H1 (cell line): ENCODE measurements at regions of chr2 and their contacts with region 1.

Region 1: GRCh38 chr2:42040643-42041278 is 7.1 kb upstream of the PKDCC start:
- DNase-seq: no peak
- H3K4me3 ChIP-seq: no peak overlapping the region
- H3K27ac ChIP-seq: no peak overlapping the region
- H3K4me1 ChIP-seq: peaks cover 4 to 9% (median 8%) of the 10 kb centered on the region in 4 experiments; a peak in 5 of 7 replicates
- H3K27me3 ChIP-seq: no peaks in the 10 kb centered on the region
- CTCF ChIP-seq: peak; percentile 22 to 52 (median 49)
- EP300 ChIP-seq: no peak
- POLR2A ChIP-seq: no peak
- RAD21 ChIP-seq: peak; percentile 38 to 63; a peak in 3 of 4 replicates

Region 2: GRCh38 chr2:41879235-41879916 is 161.4 kb before region 1 on chr2:
- CTCF ChIA-PET with region 1: interaction called, 22 read pairs
- POLR2A ChIA-PET with region 1: no interaction called
- DNase-seq: no peak
- H3K4me3 ChIP-seq: no peak overlapping the region
- H3K27ac ChIP-seq: no peak overlapping the region
- H3K4me1 ChIP-seq: peaks cover 0 to 7% (median 1%) of the 10 kb centered on the region in 4 experiments; a peak in 2 of 7 replicates
- H3K27me3 ChIP-seq: no peaks in the 10 kb centered on the region
- CTCF ChIP-seq: no peak
- EP300 ChIP-seq: no peak
- POLR2A ChIP-seq: no peak
- RAD21 ChIP-seq: no peak

Region 3: GRCh38 chr2:41937464-41937906 is 103.3 kb before region 1 on chr2:
- CTCF ChIA-PET with region 1: interaction called, 18 read pairs
- POLR2A ChIA-PET with region 1: interaction called, 20 read pairs
- DNase-seq: peak in 1 of 2 experiments; percentile 58
- H3K4me3 ChIP-seq: peak overlapping the region in 1 of 4 experiments; percentile 23; a peak in 1 of 8 replicates
- H3K27ac ChIP-seq: peak overlapping the region; percentile 27; the same call in 1 of the 2 replicates
- H3K4me1 ChIP-seq: peaks cover 10 to 33% (median 26%) of the 10 kb centered on the region in 4 experiments
- H3K27me3 ChIP-seq: no peaks in the 10 kb centered on the region; a peak in 1 of 7 replicates
- CTCF ChIP-seq: peak in 2 of 3 experiments; percentile 4 to 19; a peak in 2 of 4 replicates
- EP300 ChIP-seq: no peak
- POLR2A ChIP-seq: no peak
- RAD21 ChIP-seq: peak; percentile 7 to 28; a peak in 3 of 4 replicates

Region 4: GRCh38 chr2:42010810-42011209 is 30.0 kb before region 1 on chr2:
- CTCF ChIA-PET with region 1: interaction called, 12 read pairs
- POLR2A ChIA-PET with region 1: no interaction called
- DNase-seq: no peak
- H3K4me3 ChIP-seq: no peak overlapping the region
- H3K27ac ChIP-seq: no peak overlapping the region
- H3K4me1 ChIP-seq: no peaks in the 10 kb centered on the region
- H3K27me3 ChIP-seq: no peaks in the 10 kb centered on the region
- CTCF ChIP-seq: no peak
- EP300 ChIP-seq: no peak
- POLR2A ChIP-seq: no peak
- RAD21 ChIP-seq: no peak

Region 5: GRCh38 chr2:42028571-42029148 is 12.1 kb before region 1 on chr2:
- CTCF ChIA-PET with region 1: interaction called, 26 read pairs
- POLR2A ChIA-PET with region 1: interaction called, 46 read pairs
- DNase-seq: no peak
- H3K4me3 ChIP-seq: no peak overlapping the region
- H3K27ac ChIP-seq: no peak overlapping the region
- H3K4me1 ChIP-seq: peaks cover 19 to 42% (median 27%) of the 10 kb centered on the region in 4 experiments
- H3K27me3 ChIP-seq: peaks cover 0 to 12% (median 7%) of the 10 kb centered on the region in 4 experiments; a peak in 3 of 7 replicates
- CTCF ChIP-seq: no peak
- EP300 ChIP-seq: no peak
- POLR2A ChIP-seq: no peak
- RAD21 ChIP-seq: no peak

Region 6: GRCh38 chr2:42053791-42054701 is 13.3 kb after region 1 on chr2:
- CTCF ChIA-PET with region 1: interaction called, 31 read pairs
- POLR2A ChIA-PET with region 1: interaction called, 46 read pairs
- DNase-seq: no peak
- H3K4me3 ChIP-seq: no peak overlapping the region
- H3K27ac ChIP-seq: no peak overlapping the region
- H3K4me1 ChIP-seq: peaks cover 5 to 45% (median 36%) of the 10 kb centered on the region in 4 experiments
- H3K27me3 ChIP-seq: peaks cover 0 to 6% (median 4%) of the 10 kb centered on the region in 4 experiments; a peak in 5 of 7 replicates
- CTCF ChIP-seq: no peak
- EP300 ChIP-seq: no peak
- POLR2A ChIP-seq: no peak
- RAD21 ChIP-seq: no peak

Region 7: DNA sequence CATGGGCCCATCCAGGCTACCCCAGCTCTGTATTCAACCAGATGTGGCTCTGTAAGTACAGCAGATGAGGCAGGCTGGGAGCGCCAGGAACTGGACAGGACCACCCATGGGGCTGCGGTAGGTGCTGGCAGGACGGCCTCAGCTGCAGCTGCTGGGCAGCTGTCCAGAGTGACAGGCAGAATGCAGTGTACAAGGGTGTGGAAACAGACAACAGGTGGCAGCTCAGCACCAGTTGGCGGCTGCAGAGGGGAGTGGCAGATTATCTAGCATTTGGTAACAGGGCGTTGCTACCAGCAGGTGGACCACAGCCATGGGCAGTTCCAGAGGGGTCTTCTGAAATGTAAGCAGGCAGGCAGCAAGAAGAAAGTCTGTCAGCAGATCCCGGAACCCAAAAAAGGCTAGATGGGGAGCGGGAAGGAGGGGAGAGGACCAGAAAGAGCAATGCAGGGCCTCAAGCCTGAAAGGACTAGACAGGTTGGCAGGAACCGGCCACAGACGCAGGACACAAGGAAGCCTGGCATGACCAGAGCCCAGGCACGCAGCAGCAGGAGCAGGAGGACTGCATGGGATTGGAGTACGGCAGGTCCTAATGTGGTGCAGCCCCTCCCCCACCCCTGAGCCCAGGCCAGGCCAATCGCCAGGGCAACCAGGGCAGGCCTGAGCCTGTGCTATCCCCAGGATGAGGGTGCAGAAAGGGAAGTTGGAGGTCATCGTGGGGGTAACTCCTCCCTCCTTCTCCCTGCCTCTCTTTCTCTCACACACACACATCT is 31.8 kb after region 1 on chr2:
- CTCF ChIA-PET with region 1: interaction called, 13 read pairs
- POLR2A ChIA-PET with region 1: interaction called, 3 read pairs
- DNase-seq: no peak
- H3K4me3 ChIP-seq: no peak overlapping the region
- H3K27ac ChIP-seq: no peak overlapping the region
- H3K4me1 ChIP-seq: peaks cover 0 to 9% (median 0%) of the 10 kb centered on the region in 4 experiments; a peak in 3 of 7 replicates
- H3K27me3 ChIP-seq: no peaks in the 10 kb centered on the region
- CTCF ChIP-seq: peak; percentile 9 to 30 (median 19)
- EP300 ChIP-seq: no peak
- POLR2A ChIP-seq: no peak
- RAD21 ChIP-seq: peak in 1 of 2 experiments; percentile 19; a peak in 1 of 4 replicates

Region 8: DNA sequence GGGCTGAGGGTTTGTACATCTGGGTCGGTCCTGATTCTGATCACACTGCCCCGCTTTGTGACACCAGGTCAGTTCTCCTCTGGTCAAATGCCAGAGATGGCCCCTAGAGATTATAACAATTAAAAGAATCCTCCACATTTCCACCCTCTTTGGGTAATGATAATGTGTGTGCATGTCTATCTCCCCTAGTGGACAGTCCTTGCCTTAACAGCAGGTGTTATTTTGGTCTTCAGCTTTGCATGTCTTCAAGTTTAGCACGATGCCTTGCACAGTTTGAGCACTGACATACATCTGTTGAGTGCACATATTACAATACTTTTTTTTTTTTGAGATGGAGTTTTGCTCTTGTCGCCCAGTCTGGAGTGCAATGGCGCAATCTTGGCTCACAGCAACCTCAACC is 345.9 kb after region 1 on chr2:
- CTCF ChIA-PET with region 1: no interaction called
- POLR2A ChIA-PET with region 1: no interaction called
- DNase-seq: no peak
- H3K4me3 ChIP-seq: no peak overlapping the region
- H3K27ac ChIP-seq: no peak overlapping the region
- H3K4me1 ChIP-seq: peaks cover 0 to 3% (median 0%) of the 10 kb centered on the region in 4 experiments; a peak in 2 of 7 replicates
- H3K27me3 ChIP-seq: no peaks in the 10 kb centered on the region
- CTCF ChIP-seq: peak in 1 of 3 experiments; percentile 56; a peak in 1 of 4 replicates
- EP300 ChIP-seq: no peak
- POLR2A ChIP-seq: no peak
- RAD21 ChIP-seq: peak in 1 of 2 experiments; percentile 19; a peak in 2 of 4 replicates